ENCODE measurements at regions of chr16 and their contacts with region 1.

Region 1: GRCh38 chr16:66344533-66345145 is 21.9 kb upstream of the CDH5 start:
- DNase-seq: peak in 1 of 2 experiments; percentile 31
- ATAC-seq: peak in 1 of 2 experiments; percentile 53; a peak in 3 of 6 replicates
- H3K4me3 ChIP-seq: no peak overlapping the region
- H3K27ac ChIP-seq: no peak overlapping the region
- H3K4me1 ChIP-seq: no peaks in the 10 kb centered on the region
- CTCF ChIP-seq: peak; percentile 82
- EP300 ChIP-seq: no peak
- POLR2A ChIP-seq: no peak
- RAD21 ChIP-seq: peak; percentile 16 to 40; a peak in 2 of 5 replicates

Region 2: GRCh38 chr16:66326991-66327513 is 17.6 kb before region 1 on chr16:
- CTCF ChIA-PET with region 1: interaction called, 26 read pairs
- POLR2A ChIA-PET with region 1: no interaction called
- DNase-seq: no peak
- ATAC-seq: no peak
- H3K4me3 ChIP-seq: no peak overlapping the region
- H3K27ac ChIP-seq: no peak overlapping the region
- H3K4me1 ChIP-seq: no peaks in the 10 kb centered on the region
- CTCF ChIP-seq: no peak
- EP300 ChIP-seq: no peak
- POLR2A ChIP-seq: no peak
- RAD21 ChIP-seq: no peak

Region 3: DNA sequence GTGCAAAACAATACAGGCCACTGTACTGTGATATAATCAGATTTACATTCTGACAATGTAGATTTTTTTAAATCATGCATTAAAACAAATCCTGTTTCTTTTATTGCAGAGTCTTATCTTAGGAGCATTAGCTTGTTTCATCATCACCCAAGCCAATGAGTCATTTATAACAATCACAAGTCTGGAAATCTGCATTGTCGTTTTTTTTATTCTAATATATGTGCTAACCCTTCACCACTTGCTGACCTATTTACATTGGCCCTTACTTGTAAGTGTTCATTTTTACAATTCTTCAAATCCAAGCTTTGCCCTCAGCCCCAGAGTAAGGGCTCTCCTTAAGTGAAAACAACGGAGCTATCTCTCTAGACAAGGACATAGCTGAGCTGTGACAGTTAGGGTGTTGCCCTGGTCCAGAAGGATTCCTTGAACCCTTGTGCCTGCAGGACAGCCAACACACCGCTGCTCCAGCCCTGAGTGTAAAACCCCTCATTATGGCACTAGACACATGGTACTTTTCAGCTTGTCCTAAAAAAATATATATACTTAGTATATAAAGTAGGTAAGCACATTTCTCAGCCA is 225.3 kb after region 1 on chr16:
- CTCF ChIA-PET with region 1: no interaction called
- POLR2A ChIA-PET with region 1: no interaction called
- DNase-seq: peak; percentile 29 to 38
- ATAC-seq: peak; percentile 68 to 74; a peak in 5 of 6 replicates
- H3K4me3 ChIP-seq: no peak overlapping the region
- H3K27ac ChIP-seq: peak overlapping the region; percentile 47 to 80
- H3K4me1 ChIP-seq: peaks cover 26% of the 10 kb centered on the region
- CTCF ChIP-seq: no peak
- EP300 ChIP-seq: no peak
- POLR2A ChIP-seq: no peak
- RAD21 ChIP-seq: no peak

Measured in A549 (cell line).